Panc1 (cell line): ENCODE measurements at regions of chr1 and their contacts with region 1.

Region 1: GRCh38 chr1:42214447-42214871 is 49.9 kb upstream of the GUCA2A start:
- DNase-seq: no peak
- ATAC-seq: no peak
- H3K4me3 ChIP-seq: no peak overlapping the region
- H3K27ac ChIP-seq: no peak overlapping the region
- H3K4me1 ChIP-seq: peaks cover 19% of the 10 kb centered on the region
- H3K27me3 ChIP-seq: no peaks in the 10 kb centered on the region
- CTCF ChIP-seq: no peak

Region 2: DNA sequence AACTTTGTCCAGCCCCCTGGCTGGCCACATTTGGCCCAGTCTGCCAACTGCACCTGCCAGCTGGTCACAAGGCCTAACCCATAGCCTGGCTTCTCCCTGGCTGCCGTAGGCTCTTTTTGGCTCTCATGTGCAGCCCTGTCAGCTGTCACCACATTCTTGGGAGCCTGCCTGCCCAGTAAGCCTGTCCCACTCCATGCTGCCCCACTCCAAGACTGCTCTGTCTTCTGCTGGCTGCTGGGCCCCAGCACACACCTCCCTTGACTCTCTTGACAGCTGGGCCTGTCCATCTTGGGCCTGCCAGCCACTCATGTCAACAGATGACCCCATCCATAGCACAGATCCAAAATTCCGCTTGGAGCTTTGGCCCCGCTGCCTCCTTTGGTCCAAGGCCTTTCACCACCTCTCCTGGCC is 655.7 kb before region 1 on chr1:
- CTCF ChIA-PET with region 1: no interaction called
- POLR2A ChIA-PET with region 1: no interaction called
- in situ Hi-C with region 1: no loop called
- intact Hi-C with region 1: no loop called
- DNase-seq: no peak
- ATAC-seq: no peak
- H3K4me3 ChIP-seq: no peak overlapping the region
- H3K27ac ChIP-seq: no peak overlapping the region
- H3K4me1 ChIP-seq: no peaks in the 10 kb centered on the region
- H3K27me3 ChIP-seq: peaks cover 3% of the 10 kb centered on the region; the same call in 1 of the 2 replicates
- CTCF ChIP-seq: no peak

Region 3: DNA sequence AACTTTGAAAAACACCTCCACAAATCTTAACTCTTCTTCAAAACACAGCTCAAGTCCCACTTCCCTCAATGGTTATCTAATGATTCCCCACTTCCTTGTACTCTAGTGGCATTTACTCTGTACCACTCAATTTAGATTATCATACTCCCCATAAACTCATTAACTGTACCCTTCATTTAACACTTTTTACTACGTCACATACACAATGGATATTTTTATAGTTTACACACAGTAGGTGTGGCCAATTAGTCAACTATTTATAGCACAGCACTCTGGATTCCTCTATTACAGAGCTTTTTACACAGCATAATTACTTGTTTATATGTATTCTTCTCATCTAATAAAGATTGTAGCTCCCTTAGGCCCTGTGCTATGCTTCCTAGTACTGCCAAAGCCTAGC is 58.5 kb after region 1 on chr1:
- CTCF ChIA-PET with region 1: interaction called, 10 read pairs
- POLR2A ChIA-PET with region 1: no interaction called
- in situ Hi-C with region 1: no loop called
- intact Hi-C with region 1: no loop called
- DNase-seq: no peak
- ATAC-seq: no peak
- H3K4me3 ChIP-seq: no peak overlapping the region
- H3K27ac ChIP-seq: no peak overlapping the region
- H3K4me1 ChIP-seq: no peaks in the 10 kb centered on the region
- H3K27me3 ChIP-seq: no peaks in the 10 kb centered on the region
- CTCF ChIP-seq: no peak

Region 4: DNA sequence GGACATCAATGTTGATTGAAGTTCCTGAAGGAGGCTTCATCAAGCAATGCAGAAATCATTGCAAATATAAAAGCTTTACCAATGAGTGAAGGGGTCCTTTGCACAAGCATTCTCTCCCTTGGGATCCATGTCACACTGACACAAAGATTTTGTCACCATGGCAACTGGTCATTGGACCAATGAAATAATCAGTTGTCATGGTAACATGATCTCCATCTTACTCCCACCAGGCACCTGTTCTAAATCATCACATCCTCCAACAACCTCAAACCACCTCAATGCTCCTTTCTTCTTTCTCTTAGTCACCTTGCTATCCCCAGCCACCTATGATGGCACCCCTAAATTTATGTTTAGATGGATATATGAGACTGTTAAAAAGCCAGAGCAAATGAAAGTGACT is 134.0 kb after region 1 on chr1:
- CTCF ChIA-PET with region 1: no interaction called
- POLR2A ChIA-PET with region 1: no interaction called
- in situ Hi-C with region 1: no loop called
- intact Hi-C with region 1: no loop called
- DNase-seq: no peak
- ATAC-seq: no peak
- H3K4me3 ChIP-seq: no peak overlapping the region
- H3K27ac ChIP-seq: no peak overlapping the region
- H3K4me1 ChIP-seq: no peaks in the 10 kb centered on the region
- H3K27me3 ChIP-seq: no peaks in the 10 kb centered on the region; the same call in 1 of the 2 replicates
- CTCF ChIP-seq: no peak